WTC11 (cell line): ENCODE measurements at regions of chr1 and their contacts with region 1.

Region 1: GRCh38 chr1:70498666-70499065 is 87.6 kb downstream of the CTH start:
- DNase-seq: no peak
- ATAC-seq: no peak
- H3K4me3 Mint-ChIP-seq: no peak overlapping the region
- H3K27ac Mint-ChIP-seq: no peak overlapping the region
- H3K4me1 Mint-ChIP-seq: no peaks in the 10 kb centered on the region
- H3K27me3 Mint-ChIP-seq: no peaks in the 10 kb centered on the region; the same call in 1 of the 2 replicates
- CTCF ChIP-seq: no peak

Region 2: DNA sequence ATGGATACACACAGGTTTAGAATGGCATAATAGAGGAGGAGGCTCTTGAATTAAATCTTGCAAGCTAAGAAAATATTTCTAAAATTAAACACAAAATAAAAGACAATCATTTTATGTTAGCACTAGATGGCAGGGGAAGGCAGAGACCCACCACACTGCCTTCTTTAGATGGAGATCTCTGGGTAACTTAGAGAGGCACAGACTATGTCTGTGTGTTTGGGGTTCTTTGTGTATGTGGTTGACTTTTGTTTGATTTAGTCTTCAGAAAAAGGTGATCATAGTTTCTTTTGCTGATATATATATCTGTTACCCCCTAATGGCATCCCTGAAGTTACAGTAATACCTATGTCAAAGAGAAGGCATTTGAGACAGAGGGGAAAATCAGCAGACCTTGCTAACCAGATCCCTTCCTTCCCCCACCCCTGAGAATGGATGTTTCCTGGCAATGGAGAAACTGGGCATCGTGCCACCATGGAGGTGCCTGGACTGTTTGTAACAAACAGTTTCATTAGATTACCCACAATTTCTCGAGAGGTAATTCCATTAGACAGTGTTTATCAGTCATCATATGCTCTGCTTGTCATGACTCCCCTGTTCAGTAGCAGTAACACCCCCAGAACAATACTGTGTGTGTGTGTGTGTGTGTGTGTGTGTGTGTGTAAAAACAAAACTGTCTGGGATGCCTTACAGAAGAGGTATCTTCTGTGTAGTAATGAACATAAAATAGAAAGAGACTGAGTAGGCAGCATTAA is 1773.5 kb before region 1 on chr1:
- CTCF ChIA-PET with region 1: no interaction called
- POLR2A ChIA-PET with region 1: interaction called, 11 read pairs
- DNase-seq: no peak
- ATAC-seq: no peak
- H3K4me3 Mint-ChIP-seq: no peak overlapping the region
- H3K27ac Mint-ChIP-seq: no peak overlapping the region
- H3K4me1 Mint-ChIP-seq: no peaks in the 10 kb centered on the region
- H3K27me3 Mint-ChIP-seq: no peaks in the 10 kb centered on the region
- CTCF ChIP-seq: no peak

Region 3: GRCh38 chr1:70475023-70475422 is 23.6 kb before region 1 on chr1:
- CTCF ChIA-PET with region 1: no interaction called
- POLR2A ChIA-PET with region 1: no interaction called
- DNase-seq: no peak
- ATAC-seq: no peak
- H3K4me3 Mint-ChIP-seq: no peak overlapping the region
- H3K27ac Mint-ChIP-seq: no peak overlapping the region
- H3K4me1 Mint-ChIP-seq: no peaks in the 10 kb centered on the region
- H3K27me3 Mint-ChIP-seq: no peaks in the 10 kb centered on the region
- CTCF ChIP-seq: no peak